ENCODE measurements at regions of chr1 and their contacts with region 1.

Region 1: GRCh38 chr1:200802865-200803512 is 64.3 kb downstream of the CAMSAP2 start:
- DNase-seq: peak; percentile 78 to 83
- H3K4me3 ChIP-seq: no peak overlapping the region
- H3K27ac ChIP-seq: no peak overlapping the region
- H3K4me1 ChIP-seq: no peaks in the 10 kb centered on the region
- H3K27me3 ChIP-seq: no peaks in the 10 kb centered on the region
- CTCF ChIP-seq: peak; percentile 87 to 93 (median 92)
- POLR2A ChIP-seq: no peak

Region 2: DNA sequence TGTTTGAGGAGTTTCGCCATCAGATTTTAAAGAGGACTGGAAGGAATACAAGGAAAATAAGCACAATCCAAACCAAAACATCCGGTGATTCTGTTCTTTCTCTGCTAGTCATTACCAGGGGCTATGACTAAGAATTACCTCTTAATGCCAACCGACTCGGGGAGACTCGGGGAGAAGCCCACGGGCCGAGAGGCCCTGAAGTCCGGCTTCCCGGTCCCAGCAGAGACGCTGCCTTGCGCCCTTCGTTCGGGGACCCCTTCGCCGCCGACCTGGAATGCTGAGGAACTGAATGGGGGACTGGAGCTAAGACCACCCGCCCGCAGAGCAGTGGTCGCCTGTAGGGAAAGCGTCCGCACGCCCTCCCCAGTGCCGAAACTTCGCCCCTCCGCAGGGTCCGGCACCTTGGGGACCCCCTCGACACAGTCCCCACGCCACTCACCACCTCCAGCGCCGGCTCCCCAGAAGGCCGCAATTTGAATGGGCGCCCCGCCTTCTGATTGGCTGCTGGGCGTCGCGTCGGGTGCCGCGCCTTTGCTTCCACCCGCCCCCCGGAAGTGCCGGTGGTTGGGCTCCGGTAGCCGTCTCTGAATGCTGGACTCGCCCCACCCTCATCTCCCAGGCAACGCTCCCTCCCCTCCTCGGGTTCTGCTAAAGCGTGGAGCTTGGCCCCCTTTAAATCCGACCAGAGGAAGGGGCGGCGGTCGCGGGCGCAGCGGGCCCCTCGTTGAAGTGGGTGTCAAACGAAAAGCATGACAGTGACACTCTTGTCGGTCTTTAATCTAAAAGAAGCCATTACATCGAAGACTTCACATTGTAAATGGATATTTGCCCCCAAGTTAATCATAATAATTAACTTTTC is 182.5 kb before region 1 on chr1 and contains the start of gene KIF14:
- intact Hi-C with region 1: loop called (anchors 10 kb)
- DNase-seq: peak; percentile 88 to 89
- H3K4me3 ChIP-seq: peak within 1 kb of the TSS; percentile 45 to 57
- H3K27ac ChIP-seq: peak within 1 kb of the TSS; percentile 17 to 45
- H3K4me1 ChIP-seq: no peaks in the 10 kb centered on the region
- H3K27me3 ChIP-seq: no peaks in the 10 kb centered on the region
- CTCF ChIP-seq: no peak
- POLR2A ChIP-seq: no peak
- total RNA-seq, gene KIF14: under 0.01 to 9.2 (median 0.15) TPM in 3 of 4 donors, not detected in the other

Measured in uterus (tissue), 4 donors.